Esophagus muscularis mucosa (tissue), 4 donors: ENCODE measurements at regions of chr1 and their contacts with region 1.

Region 1: DNA sequence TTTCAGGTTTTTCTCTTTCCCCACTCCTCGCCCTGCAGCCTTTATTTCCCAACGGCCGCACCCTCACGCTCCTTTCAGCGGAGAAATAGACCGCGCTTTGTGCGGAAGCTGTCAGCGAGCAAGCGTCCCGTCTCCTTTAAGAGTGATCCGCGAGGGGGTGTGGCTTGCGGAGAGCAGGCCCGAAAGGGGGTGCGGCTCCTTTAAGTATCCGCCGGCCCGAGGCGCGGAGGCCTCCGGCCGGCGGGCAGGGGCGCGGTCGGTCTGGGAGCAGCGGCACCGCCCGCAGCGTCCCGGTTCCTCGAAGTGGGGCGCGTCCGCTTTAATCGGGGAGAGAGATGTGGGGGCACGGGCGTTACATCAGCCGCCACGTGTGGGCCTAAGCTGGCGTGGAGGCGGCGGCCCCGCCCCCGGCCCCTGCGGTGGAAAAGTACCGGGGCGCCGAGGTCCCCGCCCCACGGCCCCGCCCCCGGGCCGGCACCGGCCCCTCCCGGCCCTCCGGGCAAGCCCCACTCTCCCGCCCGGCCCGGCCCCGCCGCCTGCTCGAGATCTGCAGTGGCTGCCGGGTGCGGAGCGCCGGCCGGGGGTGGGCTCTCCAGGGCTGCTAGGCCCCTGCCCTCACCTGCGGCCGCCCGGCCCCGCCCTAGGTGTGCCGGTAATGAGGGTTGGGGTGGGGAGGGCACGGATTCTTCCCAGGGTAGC is 1.2 kb downstream of the SLC6A9 start:
- DNase-seq: peak; percentile 96
- H3K4me3 ChIP-seq: peak overlapping the region; percentile 67 to 86 (median 80)
- H3K27ac ChIP-seq: peak overlapping the region; percentile 86 to 90 (median 88)
- H3K4me1 ChIP-seq: peaks cover 7 to 57% (median 44%) of the 10 kb centered on the region in 4 donors
- H3K27me3 ChIP-seq: no peaks in the 10 kb centered on the region
- CTCF ChIP-seq: peak in 1 of 3 experiments; percentile 23
- EP300 ChIP-seq: no peak
- POLR2A ChIP-seq: no peak

Region 2: DNA sequence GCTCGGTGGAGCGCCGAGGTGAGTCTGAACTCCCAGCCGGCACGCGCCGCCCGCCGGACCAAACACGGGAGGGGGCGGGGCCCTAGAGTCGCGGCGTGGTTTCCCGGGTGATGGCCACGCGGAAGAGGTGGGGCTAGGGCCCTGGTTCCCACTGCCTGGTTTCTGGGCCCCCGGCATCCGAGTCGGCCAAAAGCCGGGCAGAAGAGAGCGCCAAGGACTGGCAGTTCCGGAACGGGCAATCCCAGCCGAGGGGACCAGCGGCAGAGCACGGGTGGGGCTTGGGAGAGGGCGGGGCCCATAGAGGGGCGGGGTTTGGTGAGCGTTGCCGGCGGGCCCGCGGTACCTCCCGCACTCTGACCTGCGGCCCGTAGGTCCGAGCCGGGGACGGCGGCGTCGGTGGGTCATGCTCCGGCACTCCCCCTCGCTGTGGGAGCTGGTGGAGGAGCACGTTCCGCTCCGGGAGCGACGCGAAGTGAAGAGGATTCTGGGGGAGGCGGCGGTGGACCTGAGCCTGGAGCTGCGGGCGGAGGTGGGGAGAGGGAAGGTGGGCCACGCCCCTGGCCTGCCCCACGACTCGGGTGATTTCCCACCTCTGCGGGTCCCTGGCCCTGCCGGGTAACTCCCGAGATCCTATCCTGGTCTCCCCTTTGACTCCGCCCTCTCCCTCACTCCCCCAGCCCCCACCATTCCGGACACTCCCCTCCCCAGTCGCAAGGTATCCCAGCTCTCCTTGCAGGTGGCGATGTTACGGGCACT is 38.4 kb before region 1 on chr1 and contains the start of gene CCDC24:
- intact Hi-C with region 1: loop called (anchors 5 kb)
- DNase-seq: peak; percentile 97
- H3K4me3 ChIP-seq: peak within 1 kb of the TSS; percentile 57 to 90 (median 64)
- H3K27ac ChIP-seq: peak within 1 kb of the TSS; percentile 75 to 84 (median 80)
- H3K4me1 ChIP-seq: peaks cover 16 to 25% (median 24%) of the 10 kb centered on the region in 4 donors
- H3K27me3 ChIP-seq: no peaks in the 10 kb centered on the region
- CTCF ChIP-seq: no peak
- EP300 ChIP-seq: no peak
- POLR2A ChIP-seq: no peak
- total RNA-seq, gene CCDC24: 6.2 to 7.3 (median 6.7) TPM